Colonic mucosa (tissue), 4 donors: ENCODE measurements at regions of chr1 and their contacts with region 1.

Region 1: GRCh38 chr1:175033953-175034352 is 10.7 kb upstream of the MRPS14 start:
- DNase-seq: no peak
- H3K4me3 ChIP-seq: no peak overlapping the region
- H3K27ac ChIP-seq: no peak overlapping the region
- H3K4me1 ChIP-seq: no peaks in the 10 kb centered on the region
- H3K27me3 ChIP-seq: no peaks in the 10 kb centered on the region
- CTCF ChIP-seq: no peak

Region 2: GRCh38 chr1:174815036-174815435 is 218.9 kb before region 1 on chr1:
- intact Hi-C with region 1: no loop called
- DNase-seq: no peak
- H3K4me3 ChIP-seq: no peak overlapping the region
- H3K27ac ChIP-seq: no peak overlapping the region
- H3K4me1 ChIP-seq: no peaks in the 10 kb centered on the region
- H3K27me3 ChIP-seq: no peaks in the 10 kb centered on the region
- CTCF ChIP-seq: no peak

Region 3: GRCh38 chr1:175124861-175125260 is 90.9 kb after region 1 on chr1:
- intact Hi-C with region 1: loop called (anchors 5 kb)
- DNase-seq: no peak
- H3K4me3 ChIP-seq: no peak overlapping the region
- H3K27ac ChIP-seq: no peak overlapping the region
- H3K4me1 ChIP-seq: no peaks in the 10 kb centered on the region
- H3K27me3 ChIP-seq: no peaks in the 10 kb centered on the region
- CTCF ChIP-seq: no peak

Region 4: DNA sequence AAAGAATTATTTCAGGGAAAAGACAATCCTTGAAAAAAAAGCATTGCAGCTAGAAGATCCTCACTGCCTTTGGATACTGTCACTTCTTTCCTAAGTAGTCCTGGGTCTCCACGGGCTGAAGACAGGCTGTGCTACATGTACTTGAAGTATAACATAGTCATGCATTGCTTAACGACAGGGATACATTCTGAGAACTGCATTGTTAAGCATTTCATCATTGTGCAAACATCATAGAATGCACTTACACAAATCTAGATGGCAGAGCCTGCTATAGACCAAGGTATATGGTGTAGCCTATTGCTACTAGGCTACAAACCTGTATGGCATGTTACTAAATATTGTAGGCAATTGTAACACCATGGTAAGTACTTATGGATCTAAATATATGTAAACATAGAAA is 104.6 kb after region 1 on chr1:
- intact Hi-C with region 1: no loop called
- DNase-seq: no peak
- H3K4me3 ChIP-seq: no peak overlapping the region
- H3K27ac ChIP-seq: no peak overlapping the region
- H3K4me1 ChIP-seq: no peaks in the 10 kb centered on the region
- H3K27me3 ChIP-seq: no peaks in the 10 kb centered on the region
- CTCF ChIP-seq: no peak

Region 5: GRCh38 chr1:175319418-175320230 is 285.7 kb after region 1 on chr1:
- intact Hi-C with region 1: loop called (anchors 5 kb)
- DNase-seq: peak; percentile 74
- H3K4me3 ChIP-seq: no peak overlapping the region
- H3K27ac ChIP-seq: no peak overlapping the region
- H3K4me1 ChIP-seq: no peaks in the 10 kb centered on the region
- H3K27me3 ChIP-seq: no peaks in the 10 kb centered on the region
- CTCF ChIP-seq: peak; percentile 71